ENCODE measurements at regions of chr5 and their contacts with region 1.

Region 1: GRCh38 chr5:42944989-42945388 is 95.1 kb downstream of the ANXA2R start:
- DNase-seq: peak; percentile 90
- H3K4me3 ChIP-seq: no peak overlapping the region
- CTCF ChIP-seq: no peak

Region 2: GRCh38 chr5:42495914-42496313 is 449.1 kb before region 1 on chr5:
- in situ Hi-C with region 1: no loop called
- DNase-seq: no peak
- H3K4me3 ChIP-seq: no peak overlapping the region
- CTCF ChIP-seq: no peak

Region 3: GRCh38 chr5:42908509-42909488 is 36.2 kb before region 1 on chr5:
- in situ Hi-C with region 1: loop called (anchors 5 kb)
- DNase-seq: peak; percentile 74
- H3K4me3 ChIP-seq: peak overlapping the region; percentile 40
- CTCF ChIP-seq: peak; percentile 84

Region 4: GRCh38 chr5:43040287-43041098 is 95.5 kb after region 1 on chr5 and contains the start of gene ANXA2R:
- in situ Hi-C with region 1: no loop called
- DNase-seq: peak; percentile 97
- H3K4me3 ChIP-seq: peak within 1 kb of the TSS; percentile 60
- CTCF ChIP-seq: peak; percentile 84